Motor neuron (in vitro differentiated cells): ENCODE measurements at regions of chr9 and their contacts with region 1.

Region 1: GRCh38 chr9:16611983-16612382 is 258.5 kb downstream of the BNC2 start:
- ATAC-seq: peak in 1 of 8 experiments; percentile 46
- H3K4me3 ChIP-seq: no peak overlapping the region
- H3K27ac ChIP-seq: no peak overlapping the region
- H3K4me1 ChIP-seq: no peaks in the 10 kb centered on the region

Region 2: DNA sequence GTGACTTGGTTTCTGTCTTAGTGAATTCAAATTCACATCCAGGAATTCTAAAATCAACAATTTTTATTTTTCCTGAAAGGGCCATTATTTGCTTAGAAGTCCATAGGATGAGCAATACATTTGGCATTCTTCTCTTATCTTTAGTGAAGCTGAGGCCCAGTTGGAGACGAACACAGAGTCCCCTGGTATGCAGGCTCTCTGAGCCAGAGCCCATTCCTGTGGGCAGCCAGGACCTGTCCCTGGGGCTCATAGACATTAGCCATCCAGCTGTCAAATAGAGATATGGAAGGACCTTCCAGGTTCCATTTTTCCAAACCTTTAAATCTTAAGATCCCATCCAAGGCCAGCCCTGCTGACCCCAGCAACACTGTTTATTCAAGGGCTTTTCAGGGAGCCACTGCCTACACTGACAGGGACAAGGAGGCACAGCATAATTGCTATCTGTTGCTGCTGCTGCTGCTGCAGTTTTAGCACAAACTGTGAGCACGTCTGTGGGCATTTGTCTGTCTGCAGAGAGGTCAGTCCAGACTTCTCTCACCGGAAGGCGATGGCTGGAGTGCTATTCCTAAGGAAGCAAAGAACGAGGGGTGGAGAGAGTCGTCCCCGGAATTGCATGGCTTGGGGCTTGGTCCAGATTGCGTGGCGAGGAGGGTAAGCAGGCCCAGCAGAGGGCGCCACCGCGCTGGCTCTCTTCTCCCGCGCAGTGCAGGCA is 420.1 kb before region 1 on chr9:
- in situ Hi-C with region 1: loop called in 1 of 9 experiments (anchors 25 kb)
- ATAC-seq: peak; percentile 97 to 100 (median 99)
- H3K4me3 ChIP-seq: no peak overlapping the region
- H3K27ac ChIP-seq: no peak overlapping the region
- H3K4me1 ChIP-seq: peaks cover 7 to 14% of the 10 kb centered on the region in 2 donors

Region 3: DNA sequence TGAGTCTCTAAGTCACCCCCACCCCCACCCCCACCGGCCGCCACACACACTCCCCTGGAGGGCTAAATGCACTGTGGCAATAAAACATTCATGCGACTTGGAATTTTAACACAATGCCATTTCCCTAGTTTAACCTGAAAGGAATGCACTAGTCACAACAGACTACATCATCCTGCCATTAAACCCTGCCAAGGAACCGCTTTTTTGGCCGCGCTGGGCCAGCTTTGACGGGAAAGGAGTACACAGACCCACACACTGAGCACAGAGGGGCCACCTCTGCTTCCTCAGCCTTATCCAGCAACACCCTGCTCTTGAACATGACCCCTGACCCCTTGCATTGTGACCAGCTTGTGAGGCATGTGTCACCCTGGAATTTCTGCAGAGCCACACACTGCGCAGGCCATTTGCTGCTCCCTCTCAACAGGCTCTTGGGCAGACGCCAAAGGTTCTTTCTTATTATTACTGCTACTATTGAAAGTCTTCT is 93.2 kb after region 1 on chr9:
- in situ Hi-C with region 1: loop called in 1 of 9 experiments (anchors 25 kb)
- ATAC-seq: peak; percentile 77 to 93 (median 87)
- H3K4me3 ChIP-seq: peak overlapping the region in 1 of 5 donors; percentile 11
- H3K27ac ChIP-seq: peak overlapping the region in 1 of 2 donors; percentile 10
- H3K4me1 ChIP-seq: peaks cover 37 to 46% of the 10 kb centered on the region in 2 donors

Region 4: GRCh38 chr9:16732546-16732945 is 120.6 kb after region 1 on chr9:
- in situ Hi-C with region 1: no loop called
- ATAC-seq: no peak
- H3K4me3 ChIP-seq: no peak overlapping the region
- H3K27ac ChIP-seq: no peak overlapping the region
- H3K4me1 ChIP-seq: peaks cover 22 to 27% of the 10 kb centered on the region in 2 donors